Activated CD4-positive, alpha-beta T cell treated with anti-CD3 and anti-CD28 coated beads for 36 hours (primary cell): ENCODE measurements at regions of chr6 and their contacts with region 1.

Region 1: GRCh38 chr6:150891888-150892485 is 26.5 kb downstream of the MTHFD1L start:
- DNase-seq: peak; percentile 70
- ATAC-seq: peak; percentile 39
- H3K4me3 Mint-ChIP-seq: no peak overlapping the region
- H3K27ac Mint-ChIP-seq: no peak overlapping the region
- H3K4me1 Mint-ChIP-seq: peaks cover 31% of the 10 kb centered on the region
- H3K27me3 Mint-ChIP-seq: no peaks in the 10 kb centered on the region

Region 2: GRCh38 chr6:150848400-150848799 is 43.6 kb before region 1 on chr6:
- CTCF ChIA-PET with region 1: no interaction called
- POLR2A ChIA-PET with region 1: no interaction called
- intact Hi-C with region 1: no loop called
- DNase-seq: no peak
- ATAC-seq: no peak
- H3K4me3 Mint-ChIP-seq: no peak overlapping the region
- H3K27ac Mint-ChIP-seq: no peak overlapping the region
- H3K4me1 Mint-ChIP-seq: peaks cover 6% of the 10 kb centered on the region
- H3K27me3 Mint-ChIP-seq: peaks cover 15% of the 10 kb centered on the region

Region 3: GRCh38 chr6:150902142-150902776 is 10.3 kb after region 1 on chr6:
- CTCF ChIA-PET with region 1: interaction called, 25 read pairs
- POLR2A ChIA-PET with region 1: no interaction called
- intact Hi-C with region 1: no loop called
- DNase-seq: no peak
- ATAC-seq: no peak
- H3K4me3 Mint-ChIP-seq: no peak overlapping the region
- H3K27ac Mint-ChIP-seq: no peak overlapping the region
- H3K4me1 Mint-ChIP-seq: no peaks in the 10 kb centered on the region
- H3K27me3 Mint-ChIP-seq: no peaks in the 10 kb centered on the region

Region 4: DNA sequence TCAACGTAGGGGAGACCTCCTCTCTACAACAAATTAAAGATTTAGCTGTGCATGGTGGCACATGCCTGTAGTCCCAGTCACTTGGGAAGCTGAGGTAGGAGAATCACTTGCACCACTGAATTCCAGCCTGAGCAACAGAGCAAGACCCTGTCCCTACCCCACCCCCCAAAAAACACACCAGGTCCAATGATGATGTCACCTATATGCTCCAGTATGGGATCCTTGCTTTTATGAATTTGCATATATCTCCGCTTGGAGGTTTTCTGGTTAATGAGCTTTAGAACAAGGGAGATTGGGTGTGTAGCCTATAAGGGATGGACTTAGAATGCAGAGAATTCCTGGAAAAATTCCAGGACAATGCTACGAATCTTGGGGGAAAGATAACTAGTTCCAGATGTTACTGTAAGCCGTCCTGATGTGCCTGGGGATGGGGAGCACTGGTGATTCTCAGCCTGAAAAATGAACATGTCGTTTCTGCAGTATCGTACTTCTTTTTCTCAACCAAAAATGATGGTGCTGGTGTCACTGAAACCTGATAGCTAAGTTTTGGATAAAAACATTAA is 438.2 kb after region 1 on chr6:
- CTCF ChIA-PET with region 1: interaction called, 78 read pairs
- POLR2A ChIA-PET with region 1: no interaction called
- intact Hi-C with region 1: loop called in 1 of 2 experiments (anchors 1 kb)
- DNase-seq: no peak
- ATAC-seq: no peak
- H3K4me3 Mint-ChIP-seq: no peak overlapping the region
- H3K27ac Mint-ChIP-seq: no peak overlapping the region
- H3K4me1 Mint-ChIP-seq: peaks cover 8% of the 10 kb centered on the region
- H3K27me3 Mint-ChIP-seq: peaks cover 21% of the 10 kb centered on the region

Region 5: DNA sequence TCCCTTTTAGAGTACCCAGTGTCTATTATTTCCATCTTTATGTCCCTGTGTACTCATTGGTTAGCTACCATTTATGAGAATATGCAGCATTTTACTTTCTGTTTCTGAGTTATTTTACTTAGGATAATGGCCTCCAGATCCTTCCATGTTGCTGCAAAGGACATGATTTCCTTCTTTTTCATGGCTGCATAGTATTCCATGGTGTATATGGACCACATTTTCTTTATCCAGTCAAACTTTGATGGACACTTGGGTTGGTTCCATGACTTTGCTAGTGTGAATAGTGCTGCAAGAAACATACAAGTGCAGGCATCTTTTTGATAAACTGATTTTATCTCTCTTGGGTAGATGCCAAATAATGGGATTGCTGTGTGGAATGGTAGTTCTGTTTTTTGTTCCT is 443.9 kb after region 1 on chr6:
- CTCF ChIA-PET with region 1: interaction called, 17 read pairs
- POLR2A ChIA-PET with region 1: no interaction called
- intact Hi-C with region 1: loop called in 1 of 2 experiments (anchors 1 kb)
- DNase-seq: no peak
- ATAC-seq: no peak
- H3K4me3 Mint-ChIP-seq: no peak overlapping the region
- H3K27ac Mint-ChIP-seq: no peak overlapping the region
- H3K4me1 Mint-ChIP-seq: no peaks in the 10 kb centered on the region
- H3K27me3 Mint-ChIP-seq: no peaks in the 10 kb centered on the region

Region 6: DNA sequence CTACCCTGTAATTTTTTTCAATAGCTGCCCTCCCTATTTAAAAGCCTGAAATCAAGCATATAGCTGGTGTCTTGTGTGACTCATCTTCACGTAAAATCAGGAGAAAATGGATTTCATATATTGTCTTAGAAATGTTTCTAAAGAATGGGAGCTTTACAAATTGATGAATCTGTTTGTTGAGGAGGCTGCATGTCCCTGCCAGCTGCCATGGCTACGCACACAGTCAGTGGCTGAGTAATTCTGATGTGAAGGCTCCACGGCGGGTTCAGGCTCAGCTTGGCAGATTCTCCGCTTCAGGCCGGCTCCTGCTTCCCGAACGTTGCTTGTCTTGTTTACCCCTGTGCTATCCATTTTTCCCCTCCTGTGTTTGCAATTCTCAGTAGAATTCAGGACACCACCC is 684.6 kb after region 1 on chr6:
- CTCF ChIA-PET with region 1: no interaction called
- POLR2A ChIA-PET with region 1: no interaction called
- intact Hi-C with region 1: no loop called
- DNase-seq: no peak
- ATAC-seq: no peak
- H3K4me3 Mint-ChIP-seq: no peak overlapping the region
- H3K27ac Mint-ChIP-seq: no peak overlapping the region
- H3K4me1 Mint-ChIP-seq: no peaks in the 10 kb centered on the region
- H3K27me3 Mint-ChIP-seq: peaks cover 8% of the 10 kb centered on the region

Region 7: GRCh38 chr6:151702851-151703611 is 811.0 kb after region 1 on chr6:
- CTCF ChIA-PET with region 1: no interaction called
- POLR2A ChIA-PET with region 1: no interaction called
- intact Hi-C with region 1: no loop called
- DNase-seq: no peak
- ATAC-seq: peak; percentile 11
- H3K4me3 Mint-ChIP-seq: no peak overlapping the region
- H3K27ac Mint-ChIP-seq: peak overlapping the region; percentile 35
- H3K4me1 Mint-ChIP-seq: peaks cover 36% of the 10 kb centered on the region
- H3K27me3 Mint-ChIP-seq: peaks cover 7% of the 10 kb centered on the region